ENCODE measurements at regions of chr7 and their contacts with region 1.

Region 1: GRCh38 chr7:139230774-139231512 is at the start of gene UBN2:
- DNase-seq: peak; percentile 68 to 91 (median 76)
- ATAC-seq: peak; percentile 86
- H3K4me3 ChIP-seq: peak within 1 kb of the TSS; percentile 77
- H3K4me3 Mint-ChIP-seq: peak within 1 kb of the TSS; percentile 96 to 100 (median 99)
- H3K27ac ChIP-seq: peak within 1 kb of the TSS; percentile 85
- H3K27ac Mint-ChIP-seq: peak within 1 kb of the TSS; percentile 93 to 98 (median 96)
- H3K4me1 ChIP-seq: no peaks in the 10 kb centered on the region
- H3K4me1 Mint-ChIP-seq: peaks cover 24 to 33% (median 29%) of the 10 kb centered on the region in 7 donors
- H3K27me3 ChIP-seq: no peaks in the 10 kb centered on the region
- H3K27me3 Mint-ChIP-seq: peaks cover 0 to 36% (median 5%) of the 10 kb centered on the region in 5 donors
- total RNA-seq, gene UBN2: 16.2 to 31.2 (median 20.5) TPM

Region 2: DNA sequence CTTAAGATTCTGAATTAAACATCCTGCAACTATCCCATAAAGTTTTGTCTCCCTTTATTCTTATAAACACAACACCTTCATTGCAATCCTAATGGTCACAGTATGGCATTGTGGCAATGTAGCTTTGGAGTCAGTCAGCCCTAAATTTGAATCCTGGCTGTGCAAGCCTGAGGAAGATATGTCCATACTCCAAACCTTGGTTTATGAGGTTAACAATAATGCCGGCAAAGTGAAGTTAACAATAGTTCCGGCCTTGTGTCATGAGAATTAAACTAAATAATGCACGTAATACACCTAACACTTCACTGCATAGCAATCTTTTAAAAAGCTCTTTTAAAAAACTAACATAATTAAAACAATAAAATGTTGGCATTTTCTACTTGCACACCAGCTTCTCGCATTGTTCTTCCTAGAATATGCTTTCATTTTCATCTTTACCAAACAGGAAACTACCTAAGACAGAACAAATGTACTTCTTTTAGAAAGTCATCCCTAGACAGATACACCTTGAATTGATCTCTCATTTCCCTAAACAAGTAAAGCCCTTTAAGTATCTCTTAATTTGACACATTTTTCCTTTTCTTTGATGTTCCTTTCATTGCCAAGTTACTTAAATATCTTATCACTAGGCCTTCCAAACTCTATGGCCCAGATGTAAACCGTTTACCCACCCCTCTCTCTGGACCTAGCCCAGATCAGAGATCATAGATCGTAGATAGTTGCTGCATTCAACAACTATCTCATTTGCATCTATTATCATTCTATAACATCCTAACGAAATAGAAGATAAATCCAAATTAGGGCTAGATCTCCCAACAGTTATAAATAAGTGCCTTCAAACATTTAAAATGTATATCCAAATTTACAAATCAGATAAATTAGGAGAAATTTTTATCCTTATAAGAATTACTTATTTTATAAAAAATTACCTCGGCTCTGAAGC is 1295.7 kb before region 1 on chr7:
- CTCF ChIA-PET with region 1: no interaction called
- POLR2A ChIA-PET with region 1: no interaction called
- intact Hi-C with region 1: loop called in 1 of 2 experiments (anchors 10 kb)
- DNase-seq: peak in 6 of 9 donors; percentile 12 to 52 (median 35)
- ATAC-seq: peak; percentile 80
- H3K4me3 ChIP-seq: peak overlapping the region; percentile 45
- H3K4me3 Mint-ChIP-seq: peak overlapping the region; percentile 68 to 92 (median 86)
- H3K27ac ChIP-seq: peak overlapping the region; percentile 70
- H3K27ac Mint-ChIP-seq: peak overlapping the region; percentile 89 to 99 (median 96)
- H3K4me1 ChIP-seq: peaks cover 12 to 20% of the 10 kb centered on the region in 2 donors
- H3K4me1 Mint-ChIP-seq: peaks cover 31 to 50% (median 42%) of the 10 kb centered on the region in 7 donors
- H3K27me3 ChIP-seq: no peaks in the 10 kb centered on the region
- H3K27me3 Mint-ChIP-seq: no peaks in the 10 kb centered on the region

Region 3: GRCh38 chr7:138898255-138898654 is 332.7 kb before region 1 on chr7:
- CTCF ChIA-PET with region 1: interaction called, 3 read pairs
- POLR2A ChIA-PET with region 1: no interaction called
- intact Hi-C with region 1: loop called (anchors 5 to 10 kb)
- DNase-seq: peak in 4 of 9 donors; percentile 14 to 36 (median 18)
- ATAC-seq: peak; percentile 49
- H3K4me3 ChIP-seq: no peak overlapping the region
- H3K4me3 Mint-ChIP-seq: peak overlapping the region in 7 of 10 donors; percentile 12 to 56 (median 27)
- H3K27ac ChIP-seq: no peak overlapping the region
- H3K27ac Mint-ChIP-seq: peak overlapping the region in 7 of 9 donors; percentile 16 to 75 (median 46)
- H3K4me1 ChIP-seq: peaks cover 9 to 26% of the 10 kb centered on the region in 2 donors
- H3K4me1 Mint-ChIP-seq: peaks cover 20 to 53% (median 48%) of the 10 kb centered on the region in 7 donors
- H3K27me3 ChIP-seq: no peaks in the 10 kb centered on the region
- H3K27me3 Mint-ChIP-seq: peaks cover 0 to 66% (median 0%) of the 10 kb centered on the region in 5 donors

Region 4: DNA sequence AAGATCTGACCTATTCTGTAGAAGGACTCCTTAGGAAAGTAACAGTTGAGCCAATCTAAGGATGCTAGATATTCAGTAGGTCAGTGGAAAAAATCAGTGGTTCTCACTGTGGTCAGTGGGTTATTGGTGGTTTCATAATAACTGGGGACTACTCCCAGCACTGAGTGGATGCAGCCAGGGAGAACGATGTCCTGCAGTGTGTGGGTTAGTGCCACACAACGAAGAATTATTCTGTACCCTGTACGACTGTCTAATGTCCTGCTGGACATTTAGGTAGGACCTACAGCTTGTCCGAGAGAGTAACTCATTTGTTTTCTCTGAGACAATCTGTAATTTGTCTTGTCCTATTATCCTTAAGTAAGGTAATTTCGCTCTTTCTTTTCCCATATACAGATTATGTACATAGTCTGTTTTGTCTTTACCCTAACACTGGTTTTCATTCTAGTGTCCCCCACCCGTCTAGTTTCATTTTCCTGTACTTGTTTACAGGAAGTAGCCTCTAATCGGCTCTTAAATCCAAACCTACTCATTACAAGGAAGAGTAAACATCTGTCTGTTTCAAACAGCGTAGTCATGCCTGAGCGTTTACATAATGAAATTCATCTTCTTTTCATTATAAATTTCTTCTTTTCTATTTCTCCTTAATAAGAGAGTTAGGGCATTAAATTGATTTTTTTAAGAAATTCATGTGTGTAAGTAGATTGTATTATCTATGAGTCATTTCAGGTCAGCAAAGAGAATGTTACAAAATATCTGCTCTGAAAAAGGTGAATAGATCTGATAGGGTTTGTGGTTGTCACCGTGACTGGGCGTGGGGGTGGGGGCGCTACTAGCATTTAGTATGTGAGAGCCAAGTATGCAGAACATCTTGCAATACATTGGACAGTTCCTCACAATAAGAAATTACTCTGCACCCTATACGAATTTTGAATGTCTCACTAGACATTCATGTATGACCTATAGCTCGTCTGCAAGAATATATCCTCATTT is 186.8 kb before region 1 on chr7:
- CTCF ChIA-PET with region 1: no interaction called
- POLR2A ChIA-PET with region 1: no interaction called
- intact Hi-C with region 1: loop called in 1 of 2 experiments (anchors 10 kb)
- DNase-seq: peak in 5 of 9 donors; percentile 36 to 71 (median 40)
- ATAC-seq: peak; percentile 81
- H3K4me3 ChIP-seq: no peak overlapping the region
- H3K4me3 Mint-ChIP-seq: peak overlapping the region in 9 of 10 donors; percentile 4 to 87 (median 58)
- H3K27ac ChIP-seq: peak overlapping the region; percentile 50
- H3K27ac Mint-ChIP-seq: peak overlapping the region; percentile 48 to 89 (median 79)
- H3K4me1 ChIP-seq: peaks cover 36 to 38% of the 10 kb centered on the region in 2 donors
- H3K4me1 Mint-ChIP-seq: peaks cover 35 to 77% (median 67%) of the 10 kb centered on the region in 7 donors
- H3K27me3 ChIP-seq: no peaks in the 10 kb centered on the region
- H3K27me3 Mint-ChIP-seq: no peaks in the 10 kb centered on the region

Region 5: GRCh38 chr7:139109188-139109982 is 121.6 kb before region 1 on chr7 and contains the start of gene ZC3HAV1:
- CTCF ChIA-PET with region 1: no interaction called
- POLR2A ChIA-PET with region 1: no interaction called
- intact Hi-C with region 1: loop called (anchors 1 kb)
- DNase-seq: peak; percentile 68 to 94 (median 90)
- ATAC-seq: peak; percentile 91
- H3K4me3 ChIP-seq: peak within 1 kb of the TSS; percentile 80
- H3K4me3 Mint-ChIP-seq: peak within 1 kb of the TSS; percentile 92 to 100 (median 98)
- H3K27ac ChIP-seq: peak within 1 kb of the TSS; percentile 93
- H3K27ac Mint-ChIP-seq: peak within 1 kb of the TSS; percentile 96 to 100 (median 98)
- H3K4me1 ChIP-seq: peaks cover 13 to 22% of the 10 kb centered on the region in 2 donors
- H3K4me1 Mint-ChIP-seq: peaks cover 24 to 49% (median 42%) of the 10 kb centered on the region in 7 donors
- H3K27me3 ChIP-seq: no peaks in the 10 kb centered on the region
- H3K27me3 Mint-ChIP-seq: no peaks in the 10 kb centered on the region
- total RNA-seq, gene ZC3HAV1: 129 to 181 (median 152) TPM

Region 6: GRCh38 chr7:139359366-139360209 is 128.6 kb after region 1 on chr7 and contains the start of gene LUC7L2:
- CTCF ChIA-PET with region 1: no interaction called
- POLR2A ChIA-PET with region 1: interaction called, 10 read pairs
- intact Hi-C with region 1: loop called (anchors 1 kb)
- DNase-seq: peak; percentile 96 to 100 (median 99)
- ATAC-seq: peak; percentile 91
- H3K4me3 ChIP-seq: peak within 1 kb of the TSS; percentile 80
- H3K4me3 Mint-ChIP-seq: peak within 1 kb of the TSS; percentile 93 to 100 (median 99)
- H3K27ac ChIP-seq: peak within 1 kb of the TSS; percentile 97
- H3K27ac Mint-ChIP-seq: peak within 1 kb of the TSS; percentile 95 to 100 (median 98)
- H3K4me1 ChIP-seq: peaks cover 10 to 27% of the 10 kb centered on the region in 2 donors
- H3K4me1 Mint-ChIP-seq: peaks cover 21 to 60% (median 45%) of the 10 kb centered on the region in 7 donors
- H3K27me3 ChIP-seq: no peaks in the 10 kb centered on the region
- H3K27me3 Mint-ChIP-seq: no peaks in the 10 kb centered on the region
- total RNA-seq, gene LUC7L2: 116 to 183 (median 150) TPM

Region 7: DNA sequence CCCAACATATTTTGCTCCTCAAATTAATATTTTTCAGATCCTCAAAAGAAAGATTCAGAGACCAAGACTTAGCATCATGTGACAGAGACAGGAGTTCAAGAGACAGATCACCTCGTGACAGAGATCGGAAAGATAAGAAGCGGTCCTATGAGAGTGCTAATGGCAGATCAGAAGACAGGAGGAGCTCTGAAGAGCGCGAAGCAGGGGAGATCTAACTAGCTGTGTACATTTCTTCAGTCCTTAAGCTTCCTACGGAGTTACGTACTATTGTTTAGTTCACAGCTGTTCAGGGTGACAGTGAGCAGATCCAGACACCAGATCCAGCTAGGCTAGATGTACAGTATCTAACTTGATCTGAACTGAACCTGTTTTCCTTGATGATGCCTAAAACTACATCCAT is 191.2 kb after region 1 on chr7:
- CTCF ChIA-PET with region 1: no interaction called
- POLR2A ChIA-PET with region 1: no interaction called
- intact Hi-C with region 1: no loop called
- DNase-seq: no peak
- ATAC-seq: no peak
- H3K4me3 ChIP-seq: no peak overlapping the region
- H3K4me3 Mint-ChIP-seq: no peak overlapping the region
- H3K27ac ChIP-seq: no peak overlapping the region
- H3K27ac Mint-ChIP-seq: peak overlapping the region in 1 of 9 donors; percentile 3
- H3K4me1 ChIP-seq: no peaks in the 10 kb centered on the region
- H3K4me1 Mint-ChIP-seq: peaks cover 0 to 5% (median 0%) of the 10 kb centered on the region in 7 donors
- H3K27me3 ChIP-seq: no peaks in the 10 kb centered on the region
- H3K27me3 Mint-ChIP-seq: no peaks in the 10 kb centered on the region

Region 8: GRCh38 chr7:140924019-140924820 is 1693.3 kb after region 1 on chr7:
- CTCF ChIA-PET with region 1: no interaction called
- POLR2A ChIA-PET with region 1: no interaction called
- intact Hi-C with region 1: loop called in 1 of 2 experiments (anchors 10 kb)
- DNase-seq: peak; percentile 61 to 89 (median 70)
- ATAC-seq: peak; percentile 84
- H3K4me3 ChIP-seq: peak overlapping the region; percentile 85
- H3K4me3 Mint-ChIP-seq: peak overlapping the region in 1 of 10 donors; percentile 89
- H3K27ac ChIP-seq: peak overlapping the region; percentile 100
- H3K27ac Mint-ChIP-seq: peak overlapping the region in 3 of 9 donors; percentile 92 to 99 (median 94)
- H3K4me1 ChIP-seq: peaks cover 9 to 18% of the 10 kb centered on the region in 2 donors
- H3K4me1 Mint-ChIP-seq: peaks cover 10 to 44% (median 22%) of the 10 kb centered on the region in 7 donors
- H3K27me3 ChIP-seq: no peaks in the 10 kb centered on the region
- H3K27me3 Mint-ChIP-seq: peaks cover 0 to 5% (median 0%) of the 10 kb centered on the region in 5 donors

Measured in naive thymus-derived CD4-positive, alpha-beta T cell (primary cell).